ENCODE measurements at regions of chr22 and their contacts with region 1.

Region 1: DNA sequence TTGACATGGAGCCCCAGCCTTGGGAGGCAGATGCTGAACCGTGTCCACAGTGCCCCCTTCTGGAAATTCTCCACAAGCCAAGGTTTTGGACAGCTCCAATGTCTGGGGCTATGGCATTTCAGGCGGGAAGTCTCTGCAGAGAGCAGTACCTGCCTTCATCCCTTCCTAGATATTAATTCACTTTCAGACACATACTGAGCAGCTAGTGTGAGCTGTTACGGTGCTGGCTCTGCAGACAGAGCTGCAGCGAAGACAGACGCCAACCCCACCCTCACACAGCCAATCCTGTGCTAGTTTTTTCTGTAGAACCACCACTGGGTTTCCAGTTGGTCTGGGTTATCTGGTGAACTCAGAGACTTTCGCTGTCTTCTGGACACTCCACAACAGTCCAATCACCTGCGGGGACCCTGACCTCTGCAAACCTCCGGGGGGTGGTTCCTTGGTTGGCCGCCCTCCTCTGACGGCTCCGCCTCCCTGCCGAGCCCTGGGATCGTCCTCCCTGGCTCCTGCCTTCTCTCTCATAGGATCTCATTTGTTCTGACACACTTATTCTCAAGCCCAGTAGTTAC is 9.1 kb downstream of the LMF2 start:
- DNase-seq: no peak
- ATAC-seq: peak; percentile 96
- H3K4me3 ChIP-seq: no peak overlapping the region
- H3K27ac ChIP-seq: no peak overlapping the region
- H3K4me1 ChIP-seq: no peaks in the 10 kb centered on the region
- H3K27me3 ChIP-seq: no peaks in the 10 kb centered on the region
- CTCF ChIP-seq: peak; percentile 70 to 79 (median 71)
- EP300 ChIP-seq: no peak
- POLR2A ChIP-seq: no peak
- RAD21 ChIP-seq: peak; percentile 82

Region 2: DNA sequence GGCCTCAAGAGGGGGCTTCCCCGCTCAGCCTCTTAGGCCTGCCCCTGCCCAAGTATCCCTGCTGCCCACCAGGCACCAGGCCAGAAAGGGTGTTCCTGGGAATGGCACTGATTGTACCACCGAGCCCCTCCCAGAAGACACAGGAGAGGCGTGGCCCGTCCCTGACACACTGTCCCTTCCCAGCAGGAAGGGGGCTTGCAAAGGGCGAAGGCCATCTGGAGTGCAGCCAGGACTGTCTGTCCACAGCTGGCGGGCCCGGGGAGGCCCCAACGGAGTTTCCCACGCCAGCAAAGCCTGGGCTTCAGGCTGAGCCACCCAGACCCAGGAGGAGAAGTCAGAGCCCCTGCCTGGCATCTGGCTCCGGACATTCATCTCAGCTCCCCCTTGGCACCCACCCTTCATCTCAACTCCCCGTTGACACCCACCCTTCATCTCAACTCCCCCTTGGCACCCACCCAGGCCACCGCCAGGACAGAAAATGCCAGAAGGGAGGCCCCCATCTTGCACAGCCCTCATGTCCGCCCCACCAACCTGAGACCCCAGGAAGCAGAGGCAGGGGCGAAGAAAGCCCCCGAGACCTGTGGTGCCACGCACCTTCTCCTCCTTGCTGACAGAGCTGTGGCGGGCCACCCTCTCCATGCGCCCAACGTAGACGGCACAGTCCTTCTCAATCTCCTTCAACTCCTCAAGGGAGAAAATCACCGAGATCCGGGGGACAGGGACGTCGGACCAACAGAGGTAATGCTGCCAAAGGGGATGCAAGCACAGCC is 273.0 kb before region 1 on chr22:
- CTCF ChIA-PET with region 1: no interaction called
- POLR2A ChIA-PET with region 1: no interaction called
- RAD21 ChIA-PET with region 1: no interaction called
- SMC1A ChIA-PET with region 1: no interaction called
- in situ Hi-C with region 1: no loop called
- intact Hi-C with region 1: no loop called
- DNase-seq: no peak
- ATAC-seq: no peak
- H3K4me3 ChIP-seq: no peak overlapping the region
- H3K27ac ChIP-seq: no peak overlapping the region
- H3K4me1 ChIP-seq: no peaks in the 10 kb centered on the region
- H3K27me3 ChIP-seq: no peaks in the 10 kb centered on the region
- CTCF ChIP-seq: no peak
- EP300 ChIP-seq: no peak
- POLR2A ChIP-seq: no peak
- RAD21 ChIP-seq: no peak

Region 3: DNA sequence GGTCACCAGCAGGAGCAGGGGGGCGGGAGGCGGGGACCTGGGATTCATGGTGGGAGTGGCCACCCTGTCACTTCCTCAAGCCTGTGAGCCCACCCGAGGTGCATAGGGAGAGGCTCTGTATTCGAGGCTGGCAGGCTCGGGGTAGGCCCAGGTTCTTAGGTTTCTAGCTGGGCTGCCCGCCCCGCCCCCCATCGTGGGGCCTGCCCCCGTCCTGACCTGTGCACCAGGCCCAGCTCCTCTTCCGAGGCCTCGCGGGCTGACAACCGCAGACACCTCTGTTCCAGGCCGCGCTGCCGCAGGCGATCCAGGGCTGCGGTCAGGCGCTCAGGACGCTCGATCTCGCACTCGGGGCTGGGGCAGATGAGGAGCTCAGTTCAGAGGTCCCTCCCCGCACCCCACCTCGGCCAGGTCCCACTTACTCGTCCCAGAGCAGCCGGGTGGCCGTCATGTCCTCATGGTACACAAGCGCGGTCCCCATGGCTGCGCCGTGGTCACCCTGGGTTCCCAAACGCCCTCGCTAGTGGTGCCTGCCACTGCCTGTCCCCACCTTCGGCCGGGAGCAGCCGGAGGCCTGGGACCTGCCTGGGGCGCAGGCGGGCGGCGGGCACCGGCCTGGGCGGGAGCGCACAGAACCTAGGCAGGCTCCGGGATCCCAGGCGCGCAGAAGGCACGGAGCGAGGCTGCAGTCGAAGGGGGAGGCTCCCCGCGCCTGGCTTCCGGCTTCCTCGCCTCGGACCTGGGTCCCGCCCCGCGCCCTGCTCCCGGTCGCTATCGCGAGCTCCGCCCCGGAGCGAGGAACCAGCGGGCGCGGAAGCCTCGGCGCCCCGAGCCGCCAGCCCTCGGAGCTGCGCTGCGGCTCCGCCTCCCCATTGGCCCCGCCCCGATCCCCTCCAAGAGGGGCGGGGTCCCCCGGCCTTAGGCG is 247.6 kb before region 1 on chr22 and contains the start of gene HDAC10:
- CTCF ChIA-PET with region 1: interaction called, 6 read pairs
- POLR2A ChIA-PET with region 1: no interaction called
- RAD21 ChIA-PET with region 1: interaction called, 4 read pairs
- SMC1A ChIA-PET with region 1: no interaction called
- in situ Hi-C with region 1: loop called (anchors 10 kb)
- intact Hi-C with region 1: loop called (anchors 5 kb)
- DNase-seq: peak; percentile 40
- ATAC-seq: peak; percentile 91
- H3K4me3 ChIP-seq: peak within 1 kb of the TSS; percentile 98
- H3K27ac ChIP-seq: peak within 1 kb of the TSS; percentile 78
- H3K4me1 ChIP-seq: peaks cover 28% of the 10 kb centered on the region
- H3K27me3 ChIP-seq: no peaks in the 10 kb centered on the region
- CTCF ChIP-seq: no peak
- EP300 ChIP-seq: no peak
- POLR2A ChIP-seq: peak; percentile 88
- RAD21 ChIP-seq: no peak
- polyA plus RNA-seq, gene HDAC10: 0.26 to 0.51 TPM

Region 4: GRCh38 chr22:50399751-50400331 is 98.6 kb before region 1 on chr22:
- CTCF ChIA-PET with region 1: interaction called, 17 read pairs
- POLR2A ChIA-PET with region 1: no interaction called
- RAD21 ChIA-PET with region 1: interaction called, 4 read pairs
- SMC1A ChIA-PET with region 1: interaction called, 7 read pairs
- in situ Hi-C with region 1: no loop called
- intact Hi-C with region 1: no loop called
- DNase-seq: no peak
- ATAC-seq: peak; percentile 84
- H3K4me3 ChIP-seq: no peak overlapping the region
- H3K27ac ChIP-seq: no peak overlapping the region
- H3K4me1 ChIP-seq: peaks cover 12% of the 10 kb centered on the region
- H3K27me3 ChIP-seq: no peaks in the 10 kb centered on the region
- CTCF ChIP-seq: peak; percentile 48 to 61 (median 52)
- EP300 ChIP-seq: no peak
- POLR2A ChIP-seq: no peak
- RAD21 ChIP-seq: peak; percentile 32; the same call in 1 of the 2 replicates

Region 5: DNA sequence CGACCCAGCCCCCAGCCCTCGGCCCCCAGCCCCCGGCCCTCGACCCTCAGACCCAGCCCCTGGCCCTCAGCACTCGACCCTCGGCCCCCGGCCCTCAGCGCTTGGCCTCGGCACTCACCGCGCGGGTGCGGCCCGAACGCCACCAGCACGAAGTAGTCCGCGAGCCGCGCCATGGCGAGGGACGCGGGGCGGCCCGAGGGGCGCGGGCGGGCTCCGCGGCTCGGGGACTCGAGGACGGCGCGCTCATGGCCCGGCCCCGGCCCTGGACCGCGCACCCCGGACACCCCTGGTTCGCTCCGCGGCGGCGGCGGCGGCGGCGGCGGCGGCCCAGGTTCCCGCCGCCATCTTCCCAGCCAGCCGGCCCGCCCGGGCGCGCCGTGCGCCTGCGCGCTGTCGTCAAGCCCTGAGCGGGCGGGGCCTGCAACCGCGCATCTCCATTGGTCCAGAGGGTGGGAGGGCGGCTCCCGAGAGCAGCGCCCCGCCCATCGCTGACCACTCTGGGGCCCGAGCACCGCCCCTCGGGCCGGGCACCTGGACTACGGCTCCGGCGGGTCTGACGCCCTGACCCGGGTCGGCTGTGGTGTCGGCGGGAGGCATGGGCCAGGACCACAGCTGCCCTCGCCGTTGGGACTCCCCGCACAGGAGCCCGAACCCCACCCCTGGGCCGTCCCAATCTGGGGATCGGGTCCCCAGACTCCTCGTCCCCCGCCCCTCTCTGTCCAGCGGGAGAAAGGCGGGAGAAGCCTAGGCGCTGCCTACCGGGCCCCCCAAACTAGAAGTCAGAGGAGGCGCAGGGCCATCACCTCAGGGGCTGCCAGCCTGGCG is 23.5 kb before region 1 on chr22 and contains the start of gene SBF1:
- CTCF ChIA-PET with region 1: interaction called, 16 read pairs
- POLR2A ChIA-PET with region 1: interaction called, 3 read pairs
- RAD21 ChIA-PET with region 1: interaction called, 8 read pairs
- SMC1A ChIA-PET with region 1: interaction called, 5 read pairs
- in situ Hi-C with region 1: no loop called
- intact Hi-C with region 1: no loop called
- DNase-seq: peak; percentile 43
- ATAC-seq: peak; percentile 81
- H3K4me3 ChIP-seq: peak within 1 kb of the TSS; percentile 96
- H3K27ac ChIP-seq: peak within 1 kb of the TSS; percentile 48; the same call in 1 of the 2 replicates
- H3K4me1 ChIP-seq: peaks cover 44% of the 10 kb centered on the region
- H3K27me3 ChIP-seq: no peaks in the 10 kb centered on the region
- CTCF ChIP-seq: no peak
- EP300 ChIP-seq: no peak
- POLR2A ChIP-seq: peak; percentile 63
- RAD21 ChIP-seq: no peak
- polyA plus RNA-seq, gene SBF1: 0.23 to 1.2 TPM

Measured in GM12878 (cell line).